Transverse colon (tissue), 4 donors: ENCODE measurements at regions of chr9 and their contacts with region 1.

Region 1: GRCh38 chr9:89597711-89598625 is 6.8 kb upstream of the GADD45G start:
- DNase-seq: peak; percentile 66
- H3K4me3 ChIP-seq: no peak overlapping the region
- H3K27ac ChIP-seq: no peak overlapping the region
- H3K4me1 ChIP-seq: peaks cover 0 to 6% (median 2%) of the 10 kb centered on the region in 4 donors
- H3K27me3 ChIP-seq: no peaks in the 10 kb centered on the region
- CTCF ChIP-seq: peak; percentile 73 to 84 (median 79)
- EP300 ChIP-seq: no peak
- POLR2A ChIP-seq: no peak

Region 2: GRCh38 chr9:90102292-90102901 is 504.4 kb after region 1 on chr9:
- in situ Hi-C with region 1: loop called (anchors 5 kb)
- intact Hi-C with region 1: loop called (anchors 2 kb)
- DNase-seq: peak; percentile 91
- H3K4me3 ChIP-seq: no peak overlapping the region
- H3K27ac ChIP-seq: no peak overlapping the region
- H3K4me1 ChIP-seq: peaks cover 0 to 10% (median 2%) of the 10 kb centered on the region in 4 donors
- H3K27me3 ChIP-seq: no peaks in the 10 kb centered on the region
- CTCF ChIP-seq: peak; percentile 76 to 96 (median 78)
- EP300 ChIP-seq: no peak
- POLR2A ChIP-seq: no peak

Region 3: DNA sequence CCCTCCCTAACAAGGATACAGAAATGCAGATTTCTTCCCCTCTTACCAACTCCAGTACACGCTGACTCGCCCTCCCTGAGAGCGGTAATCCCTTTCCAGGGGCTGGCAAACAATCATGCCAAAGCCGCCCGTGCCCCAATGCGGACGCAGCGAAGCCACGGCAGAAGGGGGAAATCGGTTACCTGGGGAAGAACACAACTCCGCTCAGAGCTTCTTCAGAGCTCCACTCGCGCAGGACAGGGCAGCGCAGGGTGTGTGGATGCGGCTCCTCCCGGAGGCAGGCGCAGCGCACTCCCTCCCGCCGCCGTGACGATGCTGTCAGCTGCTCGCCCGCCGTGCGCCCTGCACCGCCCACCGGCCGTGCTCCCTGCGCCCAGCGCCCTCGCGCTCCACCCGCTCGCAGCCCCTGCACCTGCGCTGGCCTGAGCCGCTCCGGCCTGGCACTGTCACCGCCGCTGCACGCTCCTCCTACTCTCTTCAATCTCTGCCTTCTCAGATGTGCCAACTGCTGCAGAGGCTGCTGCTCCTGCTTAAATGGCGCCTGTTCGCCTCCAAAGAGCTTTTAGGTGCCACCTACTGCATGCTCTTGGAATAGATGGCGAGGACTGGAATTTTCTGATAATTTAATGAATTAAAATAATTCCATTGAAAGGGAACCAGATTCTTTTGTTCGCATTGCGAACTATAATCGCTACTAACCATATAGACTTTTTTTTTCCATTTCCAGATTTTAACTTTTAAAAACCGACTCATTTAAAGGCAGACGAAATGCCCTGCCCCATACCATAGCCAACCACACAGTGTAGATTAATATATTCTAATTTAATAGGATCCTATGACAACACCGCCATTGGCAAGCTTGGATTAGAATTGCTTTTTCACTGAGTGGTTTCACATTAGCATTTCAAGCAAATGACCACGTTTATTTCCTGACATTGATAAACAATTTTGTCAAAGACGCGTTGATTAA is 1044.9 kb after region 1 on chr9 and contains the start of gene DIRAS2:
- in situ Hi-C with region 1: loop called in 1 of 4 experiments (anchors 25 kb)
- intact Hi-C with region 1: no loop called
- DNase-seq: peak; percentile 54
- H3K4me3 ChIP-seq: peak within 1 kb of the TSS in 3 of 4 donors; percentile 12 to 47 (median 27)
- H3K27ac ChIP-seq: no peak within 1 kb of the TSS
- H3K4me1 ChIP-seq: peaks cover 3 to 12% (median 9%) of the 10 kb centered on the region in 4 donors
- H3K27me3 ChIP-seq: peaks cover 63% of the 10 kb centered on the region
- CTCF ChIP-seq: peak in 4 of 5 experiments; percentile 25 to 47 (median 38)
- EP300 ChIP-seq: no peak
- POLR2A ChIP-seq: no peak
- total RNA-seq, gene DIRAS2: 0.14 TPM in 1 of 4 donors, not detected in the others

Region 4: DNA sequence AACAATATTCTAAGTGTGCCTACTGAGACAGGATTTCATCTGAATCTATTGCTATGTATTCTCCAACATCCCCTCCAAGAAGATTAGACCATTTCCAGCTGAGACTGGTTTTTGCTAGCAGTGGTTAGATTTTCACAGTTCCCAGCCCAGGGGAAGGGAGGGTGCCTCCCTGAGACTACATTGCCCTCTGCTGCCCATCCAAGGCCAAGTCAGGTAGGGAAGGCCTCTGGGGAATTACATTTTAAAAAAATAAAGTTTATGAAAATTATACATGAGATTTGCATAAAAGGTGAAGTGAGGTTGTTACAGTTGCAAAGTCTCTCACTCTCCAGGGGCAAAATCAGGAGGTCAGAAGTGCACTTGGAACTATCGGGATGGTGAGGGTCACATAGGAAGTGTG is 1175.6 kb after region 1 on chr9:
- in situ Hi-C with region 1: loop called in 2 of 4 experiments (anchors 25 kb)
- intact Hi-C with region 1: no loop called
- DNase-seq: peak; percentile 26
- H3K4me3 ChIP-seq: no peak overlapping the region
- H3K27ac ChIP-seq: no peak overlapping the region
- H3K4me1 ChIP-seq: no peaks in the 10 kb centered on the region
- H3K27me3 ChIP-seq: no peaks in the 10 kb centered on the region
- CTCF ChIP-seq: peak; percentile 7 to 31 (median 29)
- EP300 ChIP-seq: no peak
- POLR2A ChIP-seq: no peak